ENCODE measurements at regions of chrX and their contacts with region 1.

Region 1: DNA sequence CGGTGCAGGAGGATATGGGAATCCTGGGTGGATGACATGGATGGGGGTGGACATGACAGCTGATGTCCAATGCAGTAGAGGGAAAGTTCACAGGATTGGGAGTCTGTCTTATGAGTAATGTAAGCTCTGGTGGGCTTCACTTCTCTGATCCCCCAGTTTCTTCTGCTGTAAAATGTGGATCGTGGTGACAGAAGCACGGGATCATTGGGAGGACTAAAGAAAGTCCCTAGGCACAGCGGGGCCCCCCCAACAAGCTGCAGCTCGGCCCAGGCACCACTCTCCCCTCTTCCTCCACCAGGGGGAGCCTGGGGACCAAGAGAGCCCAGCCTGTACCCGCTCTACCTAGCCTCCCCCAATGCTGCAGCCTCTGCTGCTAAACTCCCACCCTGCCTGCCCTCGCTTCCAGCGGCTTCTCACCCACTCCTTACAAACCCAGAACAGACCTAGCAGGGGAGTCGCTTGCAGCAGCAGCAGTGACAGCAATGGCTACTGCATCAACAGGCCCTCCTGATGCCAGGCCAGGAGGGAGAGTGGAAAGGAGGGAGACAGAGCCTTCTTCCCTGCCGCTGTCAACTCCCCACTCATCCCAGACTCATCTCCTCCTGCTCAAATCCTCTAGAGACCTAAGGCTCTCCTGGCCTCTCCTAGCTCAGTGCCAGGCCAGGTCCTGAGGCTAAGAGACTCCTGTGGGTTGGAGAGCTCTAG is 36.1 kb upstream of the IQSEC2 start:
- DNase-seq: peak; percentile 49 to 80 (median 64)
- ATAC-seq: peak; percentile 81
- H3K4me3 ChIP-seq: no peak overlapping the region
- H3K4me3 Mint-ChIP-seq: peak overlapping the region; percentile 78
- H3K27ac ChIP-seq: no peak overlapping the region
- H3K27ac Mint-ChIP-seq: no peak overlapping the region
- H3K4me1 ChIP-seq: peaks cover 31% of the 10 kb centered on the region
- H3K4me1 Mint-ChIP-seq: peaks cover 13% of the 10 kb centered on the region
- H3K27me3 ChIP-seq: peaks cover 32 to 46% of the 10 kb centered on the region in 2 experiments
- H3K27me3 Mint-ChIP-seq: peaks cover 44% of the 10 kb centered on the region
- CTCF ChIP-seq: peak; percentile 65

Region 2: GRCh38 chrX:53433651-53434639 is 116.4 kb after region 1 on chrX and contains the start of gene HSD17B10:
- CTCF ChIA-PET with region 1: interaction called, 17 read pairs
- POLR2A ChIA-PET with region 1: no interaction called
- intact Hi-C with region 1: loop called (anchors 2 kb)
- DNase-seq: peak; percentile 67 to 92 (median 80)
- ATAC-seq: peak; percentile 98
- H3K4me3 ChIP-seq: peak within 1 kb of the TSS; percentile 63
- H3K4me3 Mint-ChIP-seq: peak within 1 kb of the TSS; percentile 99
- H3K27ac ChIP-seq: peak within 1 kb of the TSS; percentile 34 to 39
- H3K27ac Mint-ChIP-seq: peak within 1 kb of the TSS; percentile 93
- H3K4me1 ChIP-seq: peaks cover 18% of the 10 kb centered on the region
- H3K4me1 Mint-ChIP-seq: peaks cover 16% of the 10 kb centered on the region
- H3K27me3 ChIP-seq: no peaks in the 10 kb centered on the region
- H3K27me3 Mint-ChIP-seq: peaks cover 3% of the 10 kb centered on the region
- CTCF ChIP-seq: no peak
- total RNA-seq, gene HSD17B10: 27.0 to 28.6 TPM

Region 3: DNA sequence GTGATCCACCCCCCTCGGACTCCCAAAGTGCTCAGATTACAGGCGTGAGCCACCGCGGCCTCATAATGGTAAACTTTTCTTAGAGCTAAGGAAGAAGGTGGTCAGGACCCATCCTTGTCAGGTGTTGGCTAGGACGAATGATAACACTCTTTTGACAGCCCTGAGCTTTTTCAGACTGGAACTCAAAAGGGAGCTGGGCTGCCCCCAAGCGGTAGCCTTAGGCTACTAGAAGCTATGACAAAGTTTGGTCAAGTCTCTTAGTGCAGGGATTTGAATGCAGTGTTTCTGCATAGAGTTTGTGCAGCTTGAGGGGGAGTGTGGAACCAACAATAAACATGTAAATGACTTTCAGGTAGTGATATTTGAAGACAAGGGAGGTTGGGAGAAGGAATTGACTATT is 128.5 kb after region 1 on chrX:
- CTCF ChIA-PET with region 1: interaction called, 6 read pairs
- POLR2A ChIA-PET with region 1: no interaction called
- intact Hi-C with region 1: loop called in 1 of 2 experiments (anchors 1 kb)
- DNase-seq: peak in 12 of 14 experiments; percentile 9 to 62 (median 34)
- ATAC-seq: peak; percentile 46
- H3K4me3 ChIP-seq: no peak overlapping the region
- H3K4me3 Mint-ChIP-seq: no peak overlapping the region
- H3K27ac ChIP-seq: no peak overlapping the region
- H3K27ac Mint-ChIP-seq: no peak overlapping the region
- H3K4me1 ChIP-seq: peaks cover 12% of the 10 kb centered on the region
- H3K4me1 Mint-ChIP-seq: peaks cover 5% of the 10 kb centered on the region
- H3K27me3 ChIP-seq: no peaks in the 10 kb centered on the region
- H3K27me3 Mint-ChIP-seq: no peaks in the 10 kb centered on the region
- CTCF ChIP-seq: peak; percentile 29

Region 4: GRCh38 chrX:53481816-53482465 is 164.4 kb after region 1 on chrX:
- CTCF ChIA-PET with region 1: interaction called, 13 read pairs
- POLR2A ChIA-PET with region 1: interaction called, 3 read pairs
- intact Hi-C with region 1: loop called in 1 of 2 experiments (anchors 2 kb)
- DNase-seq: peak; percentile 5 to 67 (median 30)
- ATAC-seq: no peak
- H3K4me3 ChIP-seq: no peak overlapping the region
- H3K4me3 Mint-ChIP-seq: no peak overlapping the region
- H3K27ac ChIP-seq: no peak overlapping the region
- H3K27ac Mint-ChIP-seq: no peak overlapping the region
- H3K4me1 ChIP-seq: peaks cover 3% of the 10 kb centered on the region
- H3K4me1 Mint-ChIP-seq: no peaks in the 10 kb centered on the region
- H3K27me3 ChIP-seq: no peaks in the 10 kb centered on the region
- H3K27me3 Mint-ChIP-seq: peaks cover 9% of the 10 kb centered on the region
- CTCF ChIP-seq: peak; percentile 60

Region 5: DNA sequence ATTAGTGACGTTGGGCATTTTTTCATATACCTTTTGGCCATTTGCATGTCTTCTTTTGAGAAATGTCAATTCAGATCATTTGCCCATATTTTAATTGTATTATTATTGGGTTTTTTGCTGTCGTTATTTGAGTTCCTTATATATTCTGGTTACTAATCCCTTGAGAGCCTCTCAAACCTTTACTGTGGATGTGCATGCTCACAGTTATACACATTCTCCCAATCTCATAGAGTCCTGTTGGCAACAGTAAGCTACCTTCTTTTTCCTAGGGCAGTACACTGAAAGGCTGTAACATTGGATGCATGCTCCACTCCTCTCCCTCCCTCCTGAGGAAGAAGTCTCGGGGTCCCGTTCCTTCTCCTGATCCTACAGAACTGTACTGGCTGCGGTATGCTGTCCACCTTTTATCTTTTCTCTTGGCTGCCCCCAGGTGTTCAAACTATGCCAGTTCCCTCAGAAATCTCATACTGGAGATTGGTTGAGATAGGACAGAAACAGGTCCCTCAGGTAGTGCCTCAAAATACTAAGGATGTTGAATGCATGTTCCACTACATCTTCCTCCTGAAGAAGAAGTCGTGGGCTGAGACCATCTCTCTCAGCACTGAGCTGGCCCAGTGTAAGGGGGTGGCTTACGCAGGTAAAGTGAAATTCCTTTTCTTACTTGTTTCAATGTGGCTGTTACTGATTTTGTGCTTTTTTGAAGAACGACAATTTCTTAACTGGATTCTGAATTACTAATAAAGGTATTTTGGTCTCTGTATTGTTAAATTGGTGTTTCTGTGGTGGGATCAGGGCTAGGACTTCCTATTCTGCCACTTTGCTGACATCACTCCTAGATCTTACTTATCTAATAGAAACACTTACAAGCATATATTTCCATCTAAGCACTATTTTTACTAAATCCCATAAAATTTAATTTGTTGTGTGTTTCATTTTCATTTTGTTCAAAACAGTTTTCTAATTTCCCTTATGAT is 514.4 kb after region 1 on chrX:
- CTCF ChIA-PET with region 1: no interaction called
- POLR2A ChIA-PET with region 1: no interaction called
- intact Hi-C with region 1: loop called in 1 of 2 experiments (anchors 5 kb)
- DNase-seq: peak; percentile 1 to 62 (median 15)
- ATAC-seq: peak; percentile 84
- H3K4me3 ChIP-seq: no peak overlapping the region
- H3K4me3 Mint-ChIP-seq: no peak overlapping the region
- H3K27ac ChIP-seq: no peak overlapping the region
- H3K27ac Mint-ChIP-seq: no peak overlapping the region
- H3K4me1 ChIP-seq: peaks cover 5% of the 10 kb centered on the region
- H3K4me1 Mint-ChIP-seq: no peaks in the 10 kb centered on the region
- H3K27me3 ChIP-seq: no peaks in the 10 kb centered on the region
- H3K27me3 Mint-ChIP-seq: no peaks in the 10 kb centered on the region
- CTCF ChIP-seq: peak; percentile 43

Region 6: DNA sequence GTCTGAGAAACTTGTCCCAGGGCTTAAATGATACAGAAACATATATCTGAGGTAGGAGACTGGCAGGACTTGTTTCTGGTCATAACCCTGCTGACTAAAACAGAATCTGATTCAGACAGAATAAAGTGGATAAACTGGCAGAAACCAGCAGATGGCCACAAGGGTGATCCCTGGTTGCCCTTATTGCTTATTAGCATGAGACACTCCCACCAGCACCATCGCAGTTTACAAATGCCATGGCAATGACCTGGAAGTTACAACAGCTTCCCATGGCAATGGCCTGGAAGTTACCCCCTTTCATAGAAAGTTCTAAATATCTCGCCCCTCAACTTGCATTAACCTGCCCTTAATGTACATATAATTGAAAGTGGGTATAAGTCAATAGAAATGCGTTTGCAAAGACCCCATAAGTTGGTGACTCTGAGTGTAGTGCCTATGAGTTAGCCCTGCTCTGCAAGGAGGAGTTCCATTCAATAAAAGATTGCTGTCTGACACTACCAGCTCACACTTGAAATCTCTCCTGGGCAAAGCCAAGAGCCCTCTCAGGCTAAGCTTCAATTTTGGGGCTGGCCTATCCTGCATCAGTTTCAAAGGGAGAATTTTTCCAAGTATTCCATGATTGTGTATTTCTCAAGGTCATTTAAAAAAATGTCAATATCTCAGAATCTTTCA is 1849.8 kb after region 1 on chrX:
- CTCF ChIA-PET with region 1: no interaction called
- POLR2A ChIA-PET with region 1: no interaction called
- intact Hi-C with region 1: loop called in 1 of 2 experiments (anchors 5 kb)
- DNase-seq: no peak
- ATAC-seq: no peak
- H3K4me3 ChIP-seq: no peak overlapping the region
- H3K4me3 Mint-ChIP-seq: no peak overlapping the region
- H3K27ac ChIP-seq: no peak overlapping the region
- H3K27ac Mint-ChIP-seq: no peak overlapping the region
- H3K4me1 ChIP-seq: no peaks in the 10 kb centered on the region
- H3K4me1 Mint-ChIP-seq: no peaks in the 10 kb centered on the region
- H3K27me3 ChIP-seq: no peaks in the 10 kb centered on the region
- H3K27me3 Mint-ChIP-seq: no peaks in the 10 kb centered on the region
- CTCF ChIP-seq: no peak

Measured in CD4-positive, alpha-beta T cell (primary cell).